ENCODE measurements at regions of chr11 and their contacts with region 1.

Region 1: DNA sequence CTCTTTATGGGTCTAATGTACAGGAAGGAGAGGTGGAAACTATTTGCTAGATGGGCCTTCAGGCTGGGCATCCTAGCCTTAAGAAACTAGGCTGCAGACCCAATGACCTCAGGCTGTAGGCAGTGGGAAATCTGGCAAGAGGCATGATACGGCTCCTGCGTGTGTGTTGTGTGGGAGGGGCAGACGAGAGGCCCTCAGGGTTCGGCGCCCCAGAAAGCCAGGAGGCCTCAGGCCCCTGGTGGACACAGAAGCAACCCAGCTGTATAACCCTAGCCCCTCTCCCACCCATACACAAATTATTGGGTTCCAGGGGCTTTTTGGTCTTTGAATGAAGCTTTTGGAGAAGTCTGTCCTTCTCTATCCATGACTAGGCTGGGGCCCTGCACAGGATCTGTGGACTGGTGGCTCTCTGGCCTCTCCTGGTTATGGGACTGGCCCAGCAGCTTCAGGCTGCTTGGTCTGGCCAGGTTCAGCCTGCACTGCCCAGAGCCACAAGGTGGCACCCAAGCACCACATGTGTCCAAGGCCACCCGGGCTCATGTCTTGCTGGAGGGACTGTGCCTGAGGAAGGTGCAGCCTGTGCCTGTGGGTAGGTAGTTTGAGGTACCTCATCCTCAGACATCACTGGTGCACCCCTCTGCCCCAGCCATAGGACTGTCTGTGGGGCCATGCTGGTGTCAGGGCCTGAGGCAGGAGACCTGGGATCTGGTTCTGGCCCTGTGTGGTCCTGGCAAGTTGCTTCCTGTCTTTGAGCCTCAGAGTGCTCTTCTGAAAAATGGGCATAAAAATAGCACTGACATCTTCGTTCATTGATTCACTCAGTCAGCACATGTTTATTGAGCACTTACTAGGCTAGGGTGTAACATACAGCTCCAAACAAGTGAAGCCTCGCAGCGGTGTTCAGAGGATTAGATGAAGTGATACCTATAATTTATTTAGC is 87.5 kb downstream of the RRM1 start:
- DNase-seq: peak; percentile 54
- H3K4me3 ChIP-seq: no peak overlapping the region
- H3K27ac ChIP-seq: no peak overlapping the region
- H3K4me1 ChIP-seq: no peaks in the 10 kb centered on the region
- H3K27me3 ChIP-seq: no peaks in the 10 kb centered on the region
- CTCF ChIP-seq: peak; percentile 73 to 92
- POLR2A ChIP-seq: no peak

Region 2: DNA sequence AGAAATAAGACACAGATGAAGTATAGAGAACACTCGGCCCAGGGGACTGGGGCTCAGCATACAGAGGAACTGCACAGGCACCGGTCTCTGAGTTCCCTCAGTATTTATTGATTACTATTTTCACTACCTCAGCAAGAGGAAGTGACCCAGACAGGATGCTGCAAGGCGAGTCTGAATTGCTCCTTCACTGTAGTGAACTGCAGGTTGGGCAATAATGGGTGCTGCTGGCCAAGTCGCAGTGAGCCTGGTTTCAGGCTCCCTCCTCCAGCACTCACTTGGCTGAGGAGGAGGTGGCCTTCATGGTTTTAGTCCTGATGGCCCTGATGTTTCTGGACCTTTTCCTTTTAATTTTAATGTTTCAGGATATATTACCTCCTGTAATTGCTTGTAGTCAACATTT is 277.4 kb after region 1 on chr11:
- CTCF ChIA-PET with region 1: no interaction called
- POLR2A ChIA-PET with region 1: no interaction called
- dilution Hi-C with region 1: no loop called
- intact Hi-C with region 1: no loop called
- DNase-seq: no peak
- H3K4me3 ChIP-seq: no peak overlapping the region
- H3K27ac ChIP-seq: no peak overlapping the region
- H3K4me1 ChIP-seq: no peaks in the 10 kb centered on the region
- H3K27me3 ChIP-seq: no peaks in the 10 kb centered on the region
- CTCF ChIP-seq: no peak
- POLR2A ChIP-seq: no peak

Region 3: DNA sequence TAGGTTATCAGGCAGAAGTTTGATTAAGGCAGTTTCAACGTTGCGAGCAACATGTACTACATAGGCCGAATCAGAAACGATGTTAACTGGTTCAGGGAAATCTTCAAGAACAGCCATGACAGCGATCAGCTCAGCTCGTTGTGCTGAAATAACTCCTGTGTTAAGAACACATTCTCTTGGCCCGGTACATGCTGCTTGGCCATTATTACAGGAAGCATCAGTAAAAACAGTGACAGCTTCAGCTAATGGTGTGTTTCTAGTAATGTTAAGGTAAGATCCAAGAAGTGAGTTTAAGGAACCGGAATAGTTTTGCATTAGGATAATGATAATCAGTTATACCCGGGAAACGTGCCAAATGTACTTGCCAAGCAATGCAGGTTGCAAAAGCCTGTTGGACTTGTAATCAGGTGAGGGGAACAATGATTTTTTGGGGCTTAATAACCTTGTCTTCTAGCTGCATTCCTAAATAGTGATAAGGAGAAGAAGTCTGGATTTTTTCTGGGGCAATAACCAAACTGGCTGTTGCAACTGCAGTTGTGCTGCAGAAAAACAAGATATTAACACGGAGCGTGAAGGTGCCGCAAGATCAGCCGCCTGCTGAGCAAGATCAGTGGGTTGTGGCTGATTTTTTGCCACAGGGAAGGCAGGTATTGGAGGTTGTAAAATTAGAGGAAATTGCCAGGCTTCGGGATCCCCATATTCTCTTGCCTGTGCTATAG is 314.7 kb after region 1 on chr11:
- CTCF ChIA-PET with region 1: interaction called, 255 read pairs
- POLR2A ChIA-PET with region 1: no interaction called
- dilution Hi-C with region 1: no loop called
- intact Hi-C with region 1: loop called (anchors 1 kb)
- DNase-seq: no peak
- H3K4me3 ChIP-seq: no peak overlapping the region
- H3K27ac ChIP-seq: no peak overlapping the region
- H3K4me1 ChIP-seq: no peaks in the 10 kb centered on the region
- H3K27me3 ChIP-seq: peaks cover 18 to 23% of the 10 kb centered on the region in 2 experiments
- CTCF ChIP-seq: no peak
- POLR2A ChIP-seq: no peak

Region 4: DNA sequence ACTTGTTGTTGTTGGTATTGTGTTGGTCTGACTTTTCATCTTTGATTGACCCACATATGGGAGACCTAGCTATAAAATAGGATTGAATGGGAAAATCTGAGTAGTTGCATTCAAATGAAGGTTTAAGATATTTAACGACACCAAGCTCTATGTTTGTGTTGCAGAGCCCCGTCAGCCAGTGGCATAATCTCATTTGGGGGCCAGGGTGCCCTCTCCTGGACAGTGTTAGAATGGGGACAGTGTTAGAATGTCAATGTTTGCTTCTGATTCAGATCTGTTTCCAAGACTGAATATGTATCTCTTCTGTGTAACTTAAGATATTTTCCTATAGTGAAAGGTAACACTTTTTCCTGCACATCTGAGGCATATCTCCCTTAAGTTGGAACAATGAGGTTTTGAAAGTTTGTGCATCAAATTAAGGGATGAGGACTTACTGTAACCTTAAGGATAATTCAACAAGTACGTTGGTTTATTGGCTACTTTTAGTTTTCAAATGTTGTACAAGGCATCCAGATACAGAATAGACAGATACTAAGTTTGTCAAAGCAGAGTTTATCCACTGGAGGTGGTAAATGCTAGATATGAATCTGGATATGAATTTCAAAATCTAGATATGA is 357.7 kb after region 1 on chr11:
- CTCF ChIA-PET with region 1: interaction called, 238 read pairs
- POLR2A ChIA-PET with region 1: no interaction called
- dilution Hi-C with region 1: no loop called
- intact Hi-C with region 1: loop called (anchors 1 kb)
- DNase-seq: peak; percentile 51
- H3K4me3 ChIP-seq: no peak overlapping the region
- H3K27ac ChIP-seq: no peak overlapping the region
- H3K4me1 ChIP-seq: peaks cover 9% of the 10 kb centered on the region
- H3K27me3 ChIP-seq: peaks cover 2% of the 10 kb centered on the region in 2 experiments
- CTCF ChIP-seq: peak; percentile 48 to 79
- POLR2A ChIP-seq: no peak

Region 5: GRCh38 chr11:4551346-4551979 is 369.4 kb after region 1 on chr11:
- CTCF ChIA-PET with region 1: interaction called, 90 read pairs
- POLR2A ChIA-PET with region 1: no interaction called
- dilution Hi-C with region 1: no loop called
- intact Hi-C with region 1: loop called (anchors 1 kb)
- DNase-seq: peak; percentile 14
- H3K4me3 ChIP-seq: no peak overlapping the region
- H3K27ac ChIP-seq: no peak overlapping the region
- H3K4me1 ChIP-seq: no peaks in the 10 kb centered on the region
- H3K27me3 ChIP-seq: no peaks in the 10 kb centered on the region
- CTCF ChIP-seq: peak; percentile 32 to 40
- POLR2A ChIP-seq: no peak

Region 6: DNA sequence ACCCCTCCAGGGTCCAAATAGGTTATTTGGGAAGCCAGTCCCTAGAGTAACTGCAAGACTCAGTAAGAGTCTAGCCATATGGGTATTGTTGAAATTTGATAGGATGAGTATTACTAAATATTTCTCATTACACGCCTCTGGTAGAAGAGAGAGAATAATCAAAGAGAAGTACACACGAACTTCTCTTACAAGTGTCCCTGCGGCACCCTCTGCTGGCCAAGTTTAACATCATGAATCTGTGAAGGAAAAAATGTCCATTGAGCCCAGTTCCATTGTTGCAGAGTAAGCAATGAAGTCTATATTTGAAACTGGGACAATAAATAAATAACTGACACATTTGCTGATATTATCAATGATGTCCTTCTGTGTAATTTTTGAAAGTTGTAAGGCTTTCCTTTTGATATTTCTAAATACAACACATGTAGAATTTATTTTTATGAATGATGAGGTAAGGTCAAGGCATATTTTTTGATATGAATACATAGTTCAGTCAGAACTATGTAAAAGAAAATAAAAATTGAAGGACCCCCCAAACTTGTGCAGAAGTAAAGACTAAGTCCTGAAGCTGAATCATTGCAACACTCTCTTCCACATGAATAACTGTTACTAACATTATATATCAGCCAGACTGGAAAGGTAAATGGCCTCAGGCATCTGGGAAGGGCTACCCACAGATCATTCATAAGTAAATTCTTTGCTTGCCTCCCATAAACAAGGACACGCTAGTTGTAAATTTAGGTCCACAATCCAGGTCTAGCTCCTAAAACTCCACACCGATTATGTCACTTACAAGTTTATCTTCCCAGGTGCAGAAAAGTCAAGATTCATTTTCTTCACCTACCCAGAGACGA is 822.6 kb after region 1 on chr11:
- CTCF ChIA-PET with region 1: interaction called, 12 read pairs
- POLR2A ChIA-PET with region 1: no interaction called
- dilution Hi-C with region 1: no loop called
- intact Hi-C with region 1: loop called (anchors 1 kb)
- DNase-seq: peak; percentile 55
- H3K4me3 ChIP-seq: no peak overlapping the region
- H3K27ac ChIP-seq: no peak overlapping the region
- H3K4me1 ChIP-seq: no peaks in the 10 kb centered on the region
- H3K27me3 ChIP-seq: no peaks in the 10 kb centered on the region
- CTCF ChIP-seq: peak; percentile 27 to 47
- POLR2A ChIP-seq: no peak